Spleen (tissue), 13 donors: ENCODE measurements at regions of chr15 and their contacts with region 1.

Region 1: GRCh38 chr15:58331903-58332675 is 99.7 kb upstream of the LIPC start:
- DNase-seq: peak; percentile 92
- H3K4me3 ChIP-seq: peak overlapping the region in 1 of 8 donors; percentile 26
- H3K27ac ChIP-seq: peak overlapping the region; percentile 61 to 91 (median 84)
- H3K4me1 ChIP-seq: peaks cover 12 to 42% (median 30%) of the 10 kb centered on the region in 6 donors
- H3K27me3 ChIP-seq: no peaks in the 10 kb centered on the region
- CTCF ChIP-seq: no peak
- POLR2A ChIP-seq: no peak

Region 2: GRCh38 chr15:58241872-58242271 is 90.2 kb before region 1 on chr15:
- intact Hi-C with region 1: no loop called
- DNase-seq: no peak
- H3K4me3 ChIP-seq: no peak overlapping the region
- H3K27ac ChIP-seq: no peak overlapping the region
- H3K4me1 ChIP-seq: no peaks in the 10 kb centered on the region
- H3K27me3 ChIP-seq: no peaks in the 10 kb centered on the region
- CTCF ChIP-seq: no peak
- POLR2A ChIP-seq: no peak

Region 3: GRCh38 chr15:58269455-58270414 is 62.4 kb before region 1 on chr15:
- intact Hi-C with region 1: loop called (anchors 10 kb)
- DNase-seq: no peak
- H3K4me3 ChIP-seq: no peak overlapping the region
- H3K27ac ChIP-seq: no peak overlapping the region
- H3K4me1 ChIP-seq: peaks cover 0 to 10% (median 7%) of the 10 kb centered on the region in 6 donors
- H3K27me3 ChIP-seq: no peaks in the 10 kb centered on the region
- CTCF ChIP-seq: peak in 9 of 11 experiments; percentile 28 to 74 (median 52)
- POLR2A ChIP-seq: no peak